ENCODE measurements at regions of chr15 and their contacts with region 1.

Region 1: GRCh38 chr15:78000091-78000926 is 77.2 kb downstream of the TBC1D2B start:
- DNase-seq: peak; percentile 61 to 86 (median 75)
- ATAC-seq: peak; percentile 65 to 79 (median 74)
- H3K4me3 ChIP-seq: no peak overlapping the region
- H3K27ac ChIP-seq: no peak overlapping the region
- H3K4me1 ChIP-seq: peaks cover 5 to 38% (median 20%) of the 10 kb centered on the region in 12 donors
- H3K27me3 ChIP-seq: no peaks in the 10 kb centered on the region
- CTCF ChIP-seq: peak in 10 of 12 donors; percentile 22 to 64 (median 50)
- POLR2A ChIP-seq: no peak

Region 2: DNA sequence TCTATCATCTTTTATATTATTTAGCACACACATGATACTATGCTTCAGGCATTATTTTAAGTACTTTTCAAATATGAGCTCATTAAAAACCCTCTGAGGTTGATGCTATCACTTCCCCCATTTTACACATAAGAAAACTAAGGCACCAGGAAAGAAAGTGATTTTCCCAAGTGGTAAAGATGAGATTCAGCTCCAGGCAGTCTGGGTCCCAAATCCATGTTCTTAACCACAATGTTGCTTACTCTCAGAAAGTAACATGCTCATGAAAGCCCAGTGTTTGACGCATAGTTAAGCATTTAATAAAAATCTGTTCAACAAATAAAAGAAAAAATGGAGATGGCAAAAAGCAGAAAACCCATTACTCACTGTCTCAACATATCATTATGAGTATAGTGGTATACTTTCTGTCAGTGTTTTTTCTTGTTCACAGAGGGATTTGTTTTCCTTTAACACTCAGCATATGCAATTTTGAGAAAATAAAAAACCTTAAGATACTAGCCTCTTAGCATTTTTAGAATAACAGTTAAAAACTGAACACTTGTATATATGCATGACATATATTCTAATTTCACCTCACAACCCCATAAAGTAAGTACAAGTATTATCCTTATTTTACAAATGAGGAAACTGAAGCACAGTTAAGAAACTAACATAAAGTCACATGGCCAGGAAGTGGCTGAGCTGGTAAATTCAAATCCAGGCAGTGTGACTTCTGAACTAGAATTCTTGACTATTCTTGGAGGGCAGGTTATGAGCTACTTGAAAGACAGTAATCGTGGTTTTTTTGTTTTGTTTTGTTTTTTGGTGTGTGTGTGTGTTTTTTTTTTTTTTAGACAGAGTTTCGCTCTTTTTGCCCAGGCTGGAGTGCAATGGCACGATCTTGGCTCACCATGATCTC is 590.8 kb before region 1 on chr15:
- intact Hi-C with region 1: no loop called
- DNase-seq: no peak
- ATAC-seq: no peak
- H3K4me3 ChIP-seq: no peak overlapping the region
- H3K27ac ChIP-seq: peak overlapping the region in 1 of 12 donors; percentile 60
- H3K4me1 ChIP-seq: peaks cover 0 to 59% (median 45%) of the 10 kb centered on the region in 12 donors
- H3K27me3 ChIP-seq: no peaks in the 10 kb centered on the region
- CTCF ChIP-seq: no peak
- POLR2A ChIP-seq: no peak

Region 3: GRCh38 chr15:78056714-78057269 is 56.5 kb after region 1 on chr15:
- intact Hi-C with region 1: loop called in 1 of 10 experiments (anchors 5 kb)
- DNase-seq: peak in 3 of 5 donors; percentile 40 to 67 (median 45)
- ATAC-seq: peak; percentile 82 to 89 (median 86)
- H3K4me3 ChIP-seq: no peak overlapping the region
- H3K27ac ChIP-seq: peak overlapping the region in 9 of 12 donors; percentile 3 to 74 (median 42)
- H3K4me1 ChIP-seq: peaks cover 15 to 97% (median 54%) of the 10 kb centered on the region in 12 donors
- H3K27me3 ChIP-seq: no peaks in the 10 kb centered on the region
- CTCF ChIP-seq: no peak
- POLR2A ChIP-seq: no peak

Region 4: GRCh38 chr15:78093242-78094020 is 93.1 kb after region 1 on chr15:
- intact Hi-C with region 1: loop called in 2 of 10 experiments (anchors 5 kb)
- DNase-seq: peak in 2 of 5 donors; percentile 22 to 27
- ATAC-seq: peak; percentile 78 to 84 (median 82)
- H3K4me3 ChIP-seq: no peak overlapping the region
- H3K27ac ChIP-seq: peak overlapping the region in 3 of 12 donors; percentile 31 to 53 (median 37)
- H3K4me1 ChIP-seq: peaks cover 0 to 27% (median 20%) of the 10 kb centered on the region in 12 donors
- H3K27me3 ChIP-seq: no peaks in the 10 kb centered on the region
- CTCF ChIP-seq: no peak
- POLR2A ChIP-seq: no peak

Measured in heart left ventricle (tissue), 16 donors.